ENCODE measurements at regions of chr9 and their contacts with region 1.

Region 1: GRCh38 chr9:75027187-75028107 is 646 bp downstream of the CARNMT1 start:
- DNase-seq: peak; percentile 48
- H3K4me3 Mint-ChIP-seq: peak overlapping the region; percentile 95
- H3K27ac Mint-ChIP-seq: peak overlapping the region; percentile 98
- H3K4me1 Mint-ChIP-seq: peaks cover 45% of the 10 kb centered on the region
- H3K27me3 Mint-ChIP-seq: peaks cover 3% of the 10 kb centered on the region

Region 2: GRCh38 chr9:73132034-73132776 is 1895.2 kb before region 1 on chr9:
- intact Hi-C with region 1: loop called (anchors 10 kb)
- DNase-seq: peak; percentile 71
- H3K4me3 Mint-ChIP-seq: peak overlapping the region; percentile 85
- H3K27ac Mint-ChIP-seq: peak overlapping the region; percentile 97
- H3K4me1 Mint-ChIP-seq: peaks cover 36% of the 10 kb centered on the region
- H3K27me3 Mint-ChIP-seq: no peaks in the 10 kb centered on the region

Region 3: GRCh38 chr9:74773886-74774479 is 253.5 kb before region 1 on chr9:
- intact Hi-C with region 1: loop called (anchors 1 kb)
- DNase-seq: peak; percentile 55
- H3K4me3 Mint-ChIP-seq: no peak overlapping the region
- H3K27ac Mint-ChIP-seq: no peak overlapping the region
- H3K4me1 Mint-ChIP-seq: peaks cover 16% of the 10 kb centered on the region
- H3K27me3 Mint-ChIP-seq: peaks cover 6% of the 10 kb centered on the region

Region 4: DNA sequence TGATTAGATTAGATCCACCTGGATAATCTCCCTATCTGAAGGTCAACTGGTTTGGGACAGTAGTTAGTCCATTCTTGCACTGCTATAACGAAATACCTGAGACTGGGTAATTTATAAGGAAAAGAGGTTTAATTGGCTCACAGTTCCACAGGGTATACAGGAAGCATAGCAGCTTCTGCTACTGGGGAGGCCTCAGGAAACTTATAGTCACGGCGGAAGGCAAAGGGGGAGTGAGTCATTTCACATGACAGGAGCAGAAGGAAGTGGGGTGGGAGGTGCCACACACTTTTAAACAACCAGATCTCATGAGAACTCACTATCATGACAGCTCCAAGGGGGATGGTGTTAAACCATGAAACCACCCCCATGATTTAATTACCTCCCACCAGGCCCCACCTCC is 84.6 kb before region 1 on chr9:
- intact Hi-C with region 1: no loop called
- DNase-seq: no peak
- H3K4me3 Mint-ChIP-seq: no peak overlapping the region
- H3K27ac Mint-ChIP-seq: peak overlapping the region; percentile 50
- H3K4me1 Mint-ChIP-seq: peaks cover 21% of the 10 kb centered on the region
- H3K27me3 Mint-ChIP-seq: peaks cover 10% of the 10 kb centered on the region

Region 5: DNA sequence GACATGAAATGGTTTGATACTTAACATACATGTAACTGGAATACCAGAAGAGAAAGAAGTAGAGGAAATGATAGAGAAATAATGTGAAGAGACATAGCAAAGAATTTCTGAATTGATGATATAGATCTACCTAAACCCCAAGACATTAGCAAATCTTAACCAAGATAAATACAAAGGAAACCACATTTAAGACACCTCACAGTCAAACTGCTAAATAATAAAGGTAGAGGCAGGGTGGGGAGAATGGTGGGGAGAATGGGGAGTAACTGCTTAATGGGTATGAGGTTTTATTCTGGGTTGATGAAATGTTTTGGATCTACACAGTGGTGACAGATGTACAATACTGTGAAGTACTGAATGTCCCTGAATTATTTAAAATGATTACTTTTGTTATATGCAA is 16.9 kb before region 1 on chr9:
- intact Hi-C with region 1: no loop called
- DNase-seq: no peak
- H3K4me3 Mint-ChIP-seq: no peak overlapping the region
- H3K27ac Mint-ChIP-seq: no peak overlapping the region
- H3K4me1 Mint-ChIP-seq: peaks cover 32% of the 10 kb centered on the region
- H3K27me3 Mint-ChIP-seq: no peaks in the 10 kb centered on the region

Region 6: DNA sequence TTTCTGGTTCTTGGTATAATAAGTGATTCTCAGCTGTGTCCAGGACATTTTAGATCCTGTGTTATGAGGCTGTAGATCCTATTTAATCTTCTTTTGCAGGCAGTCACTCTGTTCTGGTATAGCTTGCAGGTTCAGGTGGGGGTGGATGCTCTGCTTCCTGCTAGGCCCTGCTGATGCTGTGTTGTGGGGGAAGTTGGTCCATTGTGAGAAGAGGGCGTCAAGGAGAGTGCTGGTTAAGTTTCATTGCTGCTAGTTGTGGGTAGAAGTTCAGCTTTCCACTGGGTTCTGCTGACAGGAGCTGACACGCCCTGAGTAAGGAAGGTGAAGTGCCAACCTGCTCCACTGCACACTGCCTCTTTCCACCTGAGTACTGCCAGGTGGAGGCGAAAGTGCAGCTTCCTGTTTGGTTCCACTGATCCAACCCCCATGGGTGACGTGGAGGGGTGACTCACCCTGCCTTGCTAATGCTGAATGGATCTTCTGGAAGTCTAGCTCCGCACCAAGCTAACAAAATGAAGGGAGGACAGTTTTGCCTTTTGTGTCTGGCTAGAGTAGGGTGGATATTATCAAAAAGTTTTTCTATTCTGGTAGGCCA is 44.2 kb after region 1 on chr9:
- intact Hi-C with region 1: loop called (anchors 2 kb)
- DNase-seq: peak; percentile 14
- H3K4me3 Mint-ChIP-seq: no peak overlapping the region
- H3K27ac Mint-ChIP-seq: peak overlapping the region; percentile 55
- H3K4me1 Mint-ChIP-seq: peaks cover 24% of the 10 kb centered on the region
- H3K27me3 Mint-ChIP-seq: no peaks in the 10 kb centered on the region

Region 7: GRCh38 chr9:75108555-75108954 is 81.1 kb after region 1 on chr9:
- intact Hi-C with region 1: no loop called
- DNase-seq: no peak
- H3K4me3 Mint-ChIP-seq: no peak overlapping the region
- H3K27ac Mint-ChIP-seq: peak overlapping the region; percentile 62
- H3K4me1 Mint-ChIP-seq: peaks cover 51% of the 10 kb centered on the region
- H3K27me3 Mint-ChIP-seq: no peaks in the 10 kb centered on the region

Region 8: DNA sequence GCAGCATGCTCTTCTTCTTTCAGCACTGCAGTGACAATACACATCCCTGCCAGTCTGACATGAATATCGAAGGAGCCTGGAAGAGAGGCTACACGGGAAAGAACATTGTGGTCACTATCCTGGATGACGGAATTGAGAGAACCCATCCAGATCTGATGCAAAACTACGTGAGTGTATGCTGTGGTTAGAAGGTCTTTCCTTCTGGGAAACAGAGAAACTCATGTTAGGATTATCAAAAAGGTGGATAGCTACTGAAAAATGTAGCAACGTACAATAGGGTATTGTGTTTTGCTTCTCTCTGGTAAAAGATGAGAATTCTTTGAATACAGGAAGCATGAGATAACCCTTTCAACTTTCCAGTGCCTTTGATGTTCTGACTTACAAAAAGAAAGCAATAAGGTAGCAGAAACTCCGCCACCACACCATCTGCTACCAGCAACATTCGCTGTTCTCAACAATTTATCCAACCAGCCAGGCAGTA is 996.3 kb after region 1 on chr9:
- intact Hi-C with region 1: loop called (anchors 10 kb)
- DNase-seq: peak; percentile 32
- H3K4me3 Mint-ChIP-seq: peak overlapping the region; percentile 64
- H3K27ac Mint-ChIP-seq: peak overlapping the region; percentile 70
- H3K4me1 Mint-ChIP-seq: peaks cover 79% of the 10 kb centered on the region
- H3K27me3 Mint-ChIP-seq: no peaks in the 10 kb centered on the region